Mammary epithelial cell (primary cell): ENCODE measurements at regions of chr5 and their contacts with region 1.

Region 1: GRCh38 chr5:176559683-176560082 is 10.5 kb downstream of the CDHR2 start:
- DNase-seq: peak; percentile 30
- H3K4me3 ChIP-seq: no peak overlapping the region
- H3K27ac ChIP-seq: no peak overlapping the region
- H3K4me1 ChIP-seq: no peaks in the 10 kb centered on the region
- H3K27me3 ChIP-seq: no peaks in the 10 kb centered on the region
- CTCF ChIP-seq: peak in 1 of 2 donors; percentile 38

Region 2: DNA sequence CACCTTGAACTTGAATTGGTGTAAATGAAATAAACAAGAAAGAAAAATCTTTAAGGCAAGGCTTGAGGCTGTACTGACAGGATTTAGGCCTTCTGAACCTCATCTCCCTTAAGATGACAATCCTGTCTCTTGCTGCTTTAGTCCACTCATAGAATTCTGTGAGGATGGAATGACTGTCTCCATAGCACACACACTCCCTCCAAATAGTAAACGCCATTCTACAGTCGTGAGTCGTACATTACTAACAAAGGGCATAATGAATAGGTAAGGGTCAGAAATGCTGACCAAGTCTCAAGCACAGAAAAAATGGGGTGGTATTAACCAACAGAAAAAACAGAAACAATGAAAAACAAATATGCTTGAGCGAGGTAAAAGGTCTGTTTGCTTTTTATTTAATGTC is 393.3 kb before region 1 on chr5:
- CTCF ChIA-PET with region 1: no interaction called
- dilution Hi-C with region 1: no loop called
- in situ Hi-C with region 1: no loop called
- intact Hi-C with region 1: no loop called
- DNase-seq: peak; percentile 80
- H3K4me3 ChIP-seq: no peak overlapping the region
- H3K27ac ChIP-seq: peak overlapping the region; percentile 22
- H3K4me1 ChIP-seq: peaks cover 10% of the 10 kb centered on the region
- H3K27me3 ChIP-seq: no peaks in the 10 kb centered on the region
- CTCF ChIP-seq: no peak

Region 3: GRCh38 chr5:176481711-176482110 is 78.0 kb before region 1 on chr5:
- CTCF ChIA-PET with region 1: no interaction called
- dilution Hi-C with region 1: loop called (anchors 5 kb)
- in situ Hi-C with region 1: no loop called
- intact Hi-C with region 1: no loop called
- DNase-seq: no peak
- H3K4me3 ChIP-seq: no peak overlapping the region
- H3K27ac ChIP-seq: no peak overlapping the region
- H3K4me1 ChIP-seq: no peaks in the 10 kb centered on the region
- H3K27me3 ChIP-seq: no peaks in the 10 kb centered on the region
- CTCF ChIP-seq: no peak